Stomach (tissue), 19 donors: ENCODE measurements at regions of chr9 and their contacts with region 1.

Region 1: DNA sequence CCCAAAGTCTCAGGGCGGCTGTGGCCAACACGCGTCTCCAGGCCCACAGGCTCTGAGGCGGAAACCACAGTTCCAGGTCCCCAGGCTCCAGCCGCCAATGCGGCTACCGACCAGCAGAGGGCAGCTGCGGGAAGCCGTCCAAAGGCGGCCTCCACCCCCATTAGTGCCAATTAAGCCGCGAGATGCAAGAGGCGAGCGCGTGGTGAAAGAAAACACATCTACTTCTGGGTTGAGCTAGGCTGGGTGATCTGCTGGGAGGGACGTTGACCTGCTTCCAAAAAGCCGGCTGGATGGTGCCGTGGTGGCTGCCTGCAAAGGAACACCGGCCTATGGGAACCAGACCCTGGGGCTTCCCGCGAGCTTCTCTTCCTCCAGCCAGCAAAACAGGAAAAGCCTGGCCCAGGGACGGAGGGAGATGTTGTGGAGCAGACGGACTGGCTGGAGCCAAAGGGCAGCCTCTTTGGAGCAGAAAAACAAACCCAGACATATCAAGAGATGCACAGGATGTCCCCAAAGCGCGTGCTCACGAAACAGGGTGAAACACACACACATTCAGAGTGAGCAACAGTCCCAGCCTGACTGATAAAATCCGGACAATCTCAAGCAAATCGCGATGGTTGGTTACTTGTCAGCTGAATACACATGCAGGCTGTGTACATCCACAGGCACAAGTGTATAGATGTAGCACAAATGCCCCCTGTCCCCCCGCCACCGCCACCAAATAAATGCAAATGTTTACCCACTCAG is 187.1 kb upstream of the BRINP1 start:
- DNase-seq: peak; percentile 74 to 88
- H3K4me3 ChIP-seq: peak overlapping the region; percentile 24 to 39 (median 32)
- H3K27ac ChIP-seq: peak overlapping the region in 2 of 5 donors; percentile 11 to 44
- H3K4me1 ChIP-seq: peaks cover 0 to 14% (median 5%) of the 10 kb centered on the region in 4 donors
- H3K27me3 ChIP-seq: no peaks in the 10 kb centered on the region
- CTCF ChIP-seq: peak in 5 of 7 experiments; percentile 69 to 91 (median 82)
- EP300 ChIP-seq: no peak
- POLR2A ChIP-seq: no peak

Region 2: DNA sequence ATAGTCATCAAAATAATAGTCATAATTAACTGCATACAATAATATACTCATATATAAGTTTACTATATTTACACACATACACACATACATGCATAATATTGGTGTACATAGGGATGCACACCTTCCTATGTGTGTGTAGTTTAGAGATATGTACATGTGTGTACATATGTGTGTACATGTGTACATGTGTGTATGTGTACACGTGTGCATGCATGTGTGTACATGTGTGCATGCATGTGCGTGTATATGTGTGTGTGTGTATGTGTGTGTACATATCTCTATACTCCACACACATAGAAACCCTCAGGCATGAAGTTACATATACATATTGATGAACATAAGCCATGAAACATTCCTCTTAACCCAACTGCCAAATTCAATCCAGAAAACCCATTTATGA is 1304.3 kb before region 1 on chr9:
- intact Hi-C with region 1: no loop called
- DNase-seq: no peak
- H3K4me3 ChIP-seq: no peak overlapping the region
- H3K27ac ChIP-seq: no peak overlapping the region
- H3K4me1 ChIP-seq: no peaks in the 10 kb centered on the region
- H3K27me3 ChIP-seq: no peaks in the 10 kb centered on the region
- CTCF ChIP-seq: no peak
- EP300 ChIP-seq: no peak
- POLR2A ChIP-seq: no peak

Region 3: DNA sequence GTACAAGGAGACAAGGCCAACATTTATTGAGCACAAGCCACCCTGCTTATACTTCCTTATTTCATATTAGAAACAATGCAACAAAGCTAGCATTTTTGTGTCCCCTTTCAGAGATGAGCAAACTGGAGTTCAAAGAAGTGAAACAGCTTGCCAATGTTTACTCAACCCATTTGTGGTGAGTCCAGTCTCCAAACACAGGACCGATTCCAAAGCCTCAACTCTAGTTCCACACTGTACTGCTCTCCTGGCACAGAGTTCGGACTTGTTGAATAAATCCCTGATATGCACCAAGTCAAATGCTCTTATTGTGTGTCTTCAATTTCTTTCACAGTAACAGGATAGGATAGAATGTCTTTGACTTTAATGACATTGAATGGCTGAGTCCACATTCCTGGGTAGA is 417.7 kb after region 1 on chr9:
- intact Hi-C with region 1: loop called (anchors 10 kb)
- DNase-seq: peak in 1 of 2 donors; percentile 27
- H3K4me3 ChIP-seq: no peak overlapping the region
- H3K27ac ChIP-seq: no peak overlapping the region
- H3K4me1 ChIP-seq: peaks cover 0 to 7% (median under 1%) of the 10 kb centered on the region in 4 donors
- H3K27me3 ChIP-seq: no peaks in the 10 kb centered on the region
- CTCF ChIP-seq: no peak
- EP300 ChIP-seq: no peak
- POLR2A ChIP-seq: no peak